Activated naive CD4-positive, alpha-beta T cell treated with anti-CD3 and anti-CD28 coated beads for 36 hours (primary cell): ENCODE measurements at regions of chr22 and their contacts with region 1.

Region 1: GRCh38 chr22:19607192-19608002 is 83.2 kb upstream of the CLDN5 start:
- DNase-seq: peak; percentile 94
- H3K4me3 Mint-ChIP-seq: peak overlapping the region; percentile 57
- H3K27ac Mint-ChIP-seq: peak overlapping the region; percentile 76
- H3K4me1 Mint-ChIP-seq: peaks cover 62% of the 10 kb centered on the region
- H3K27me3 Mint-ChIP-seq: no peaks in the 10 kb centered on the region

Region 2: GRCh38 chr22:19447388-19448075 is 159.9 kb before region 1 on chr22 and contains the start of gene C22orf39:
- CTCF ChIA-PET with region 1: no interaction called
- intact Hi-C with region 1: loop called (anchors 5 kb)
- DNase-seq: peak; percentile 93
- H3K4me3 Mint-ChIP-seq: peak within 1 kb of the TSS; percentile 86
- H3K27ac Mint-ChIP-seq: peak within 1 kb of the TSS; percentile 90
- H3K4me1 Mint-ChIP-seq: peaks cover 46% of the 10 kb centered on the region
- H3K27me3 Mint-ChIP-seq: no peaks in the 10 kb centered on the region
- total RNA-seq, gene C22orf39: 29.3 to 30.2 TPM

Region 3: GRCh38 chr22:19576460-19577421 is 30.7 kb before region 1 on chr22:
- CTCF ChIA-PET with region 1: interaction called, 3 read pairs
- intact Hi-C with region 1: loop called (anchors 1 kb)
- DNase-seq: peak; percentile 84
- H3K4me3 Mint-ChIP-seq: peak overlapping the region; percentile 17
- H3K27ac Mint-ChIP-seq: peak overlapping the region; percentile 75
- H3K4me1 Mint-ChIP-seq: peaks cover 42% of the 10 kb centered on the region
- H3K27me3 Mint-ChIP-seq: no peaks in the 10 kb centered on the region

Region 4: DNA sequence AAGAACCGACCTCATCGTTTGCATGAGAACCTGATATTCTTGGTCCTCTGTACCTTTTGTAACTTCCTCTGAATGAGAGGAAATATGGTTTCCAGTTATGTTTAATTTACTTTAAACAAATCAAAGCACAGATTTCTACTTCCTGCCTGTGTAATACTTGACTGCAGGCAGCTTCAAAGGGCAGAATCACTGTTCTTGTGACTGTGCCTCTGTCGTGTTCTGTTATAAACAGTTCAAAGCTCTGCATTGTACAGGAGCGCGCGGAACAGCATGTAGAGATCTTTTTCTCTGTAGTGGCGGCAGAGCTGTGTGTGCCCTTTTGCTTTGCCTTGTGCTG is 10.0 kb before region 1 on chr22:
- CTCF ChIA-PET with region 1: no interaction called
- intact Hi-C with region 1: loop called (anchors 1 kb)
- DNase-seq: peak; percentile 76
- H3K4me3 Mint-ChIP-seq: peak overlapping the region; percentile 53
- H3K27ac Mint-ChIP-seq: peak overlapping the region; percentile 94
- H3K4me1 Mint-ChIP-seq: peaks cover 54% of the 10 kb centered on the region
- H3K27me3 Mint-ChIP-seq: no peaks in the 10 kb centered on the region

Region 5: DNA sequence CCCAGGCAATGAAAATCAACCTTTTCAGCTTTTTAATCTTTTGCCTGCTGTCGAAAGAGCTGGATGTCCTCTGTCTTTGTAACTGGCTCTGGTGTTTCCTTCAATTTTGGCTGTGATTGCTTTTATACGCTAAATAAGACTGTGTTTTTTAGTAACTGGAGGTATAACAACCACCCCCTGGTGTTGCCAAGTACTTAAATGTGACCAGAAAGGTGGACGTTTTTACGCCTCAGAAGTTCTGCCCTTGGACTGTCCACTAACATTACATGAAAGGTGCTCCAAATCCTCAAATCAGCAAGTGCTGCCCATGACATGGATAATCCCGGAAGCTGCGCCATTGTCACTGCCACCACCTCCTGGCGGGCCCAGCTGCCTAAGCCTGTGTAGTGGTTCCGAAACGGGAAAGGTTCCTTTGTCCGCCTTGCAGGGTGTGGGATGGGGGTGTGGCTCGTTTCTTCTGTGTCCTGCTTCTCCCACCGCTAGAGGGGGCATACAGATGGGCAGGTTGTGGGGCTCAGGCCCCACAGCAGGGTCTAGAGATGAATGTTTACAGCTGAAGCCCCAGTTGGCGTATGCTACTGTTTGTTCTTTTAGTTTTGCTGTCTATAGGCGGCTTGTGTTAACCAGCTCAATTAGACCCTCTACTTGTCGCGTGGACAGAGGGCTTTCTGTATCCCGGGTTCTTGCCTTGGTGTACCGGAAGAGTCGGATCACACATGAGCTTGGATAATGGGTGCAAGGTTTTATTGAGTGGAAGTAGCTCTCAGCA is 24.7 kb after region 1 on chr22:
- CTCF ChIA-PET with region 1: no interaction called
- intact Hi-C with region 1: no loop called
- DNase-seq: peak; percentile 23
- H3K4me3 Mint-ChIP-seq: no peak overlapping the region
- H3K27ac Mint-ChIP-seq: no peak overlapping the region
- H3K4me1 Mint-ChIP-seq: peaks cover 3% of the 10 kb centered on the region
- H3K27me3 Mint-ChIP-seq: no peaks in the 10 kb centered on the region